Panc1 (cell line): ENCODE measurements at regions of chr14 and their contacts with region 1.

Region 1: DNA sequence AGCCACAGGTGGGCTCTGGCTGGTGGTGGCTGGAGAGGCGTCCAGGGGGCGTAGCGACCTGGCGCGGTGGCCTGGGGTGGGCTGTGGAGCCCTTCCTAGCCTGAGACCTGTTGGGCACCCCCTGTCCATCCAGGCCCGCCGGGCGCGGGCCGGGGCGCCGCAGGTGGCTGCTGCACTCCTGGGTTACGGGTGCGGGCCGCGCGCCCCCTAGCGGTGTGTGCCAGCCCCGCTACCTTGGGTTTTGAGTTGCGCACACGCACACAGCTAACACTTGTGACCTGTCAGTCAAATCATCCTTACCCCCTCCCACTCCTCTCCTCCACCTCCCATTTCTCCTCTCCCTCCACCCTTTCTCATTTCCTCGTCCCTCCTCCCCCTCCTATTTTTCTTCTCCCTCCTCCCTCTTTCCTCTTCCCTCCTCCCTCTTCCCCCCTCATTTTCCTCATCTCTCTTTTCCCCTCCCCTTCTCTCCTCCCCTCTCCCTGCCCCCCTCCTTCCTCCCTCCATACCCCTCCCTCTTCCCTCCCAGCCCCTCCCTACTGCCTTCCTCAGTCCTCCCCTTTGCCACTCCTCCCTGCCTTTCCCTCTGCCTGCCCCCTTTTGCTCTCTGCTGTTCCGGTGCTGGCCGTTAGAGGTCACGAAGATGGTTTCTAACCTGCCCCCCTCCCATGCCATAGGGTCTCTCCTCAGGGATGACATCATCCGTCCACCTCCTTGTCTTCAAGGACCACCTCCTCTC is 2.3 kb downstream of the MEG3 start:
- DNase-seq: no peak
- ATAC-seq: peak; percentile 88
- H3K4me3 ChIP-seq: peak overlapping the region; percentile 55 to 83
- H3K27ac ChIP-seq: no peak overlapping the region; the same call in 1 of the 2 replicates
- H3K4me1 ChIP-seq: peaks cover 4% of the 10 kb centered on the region; the same call in 1 of the 2 replicates
- H3K27me3 ChIP-seq: no peaks in the 10 kb centered on the region
- CTCF ChIP-seq: peak; percentile 66; the same call in 1 of the 2 replicates

Region 2: GRCh38 chr14:100664841-100665510 is 163.2 kb before region 1 on chr14:
- CTCF ChIA-PET with region 1: no interaction called
- POLR2A ChIA-PET with region 1: no interaction called
- in situ Hi-C with region 1: no loop called
- intact Hi-C with region 1: loop called (anchors 5 kb)
- DNase-seq: no peak
- ATAC-seq: no peak
- H3K4me3 ChIP-seq: no peak overlapping the region
- H3K27ac ChIP-seq: peak overlapping the region; percentile 48; the same call in 1 of the 2 replicates
- H3K4me1 ChIP-seq: peaks cover 34% of the 10 kb centered on the region
- H3K27me3 ChIP-seq: no peaks in the 10 kb centered on the region
- CTCF ChIP-seq: no peak

Region 3: DNA sequence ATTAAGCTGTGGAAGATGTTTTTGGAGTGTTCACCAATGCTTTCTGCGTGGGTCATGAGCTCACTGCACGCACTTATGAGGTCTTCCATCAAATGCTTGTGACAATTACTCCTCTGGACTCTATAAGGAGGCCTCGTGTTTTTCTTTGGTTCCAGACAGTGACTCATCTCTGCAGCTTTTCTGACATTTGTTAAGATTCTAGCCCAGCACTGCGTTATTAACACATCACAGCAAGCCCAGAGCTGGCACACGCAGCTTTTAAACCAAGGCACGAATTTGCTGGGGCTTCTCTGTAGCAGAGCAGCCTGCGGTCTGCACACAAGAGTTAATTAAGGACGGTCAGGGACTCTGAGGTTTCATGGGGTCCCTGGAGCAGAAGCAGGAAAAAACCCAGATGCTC is 14.6 kb after region 1 on chr14:
- CTCF ChIA-PET with region 1: no interaction called
- POLR2A ChIA-PET with region 1: no interaction called
- in situ Hi-C with region 1: no loop called
- intact Hi-C with region 1: no loop called
- DNase-seq: no peak
- ATAC-seq: no peak
- H3K4me3 ChIP-seq: no peak overlapping the region
- H3K27ac ChIP-seq: no peak overlapping the region
- H3K4me1 ChIP-seq: no peaks in the 10 kb centered on the region
- H3K27me3 ChIP-seq: no peaks in the 10 kb centered on the region
- CTCF ChIP-seq: no peak